IMR-90 (cell line): ENCODE measurements at regions of chr1 and their contacts with region 1.

Region 1: DNA sequence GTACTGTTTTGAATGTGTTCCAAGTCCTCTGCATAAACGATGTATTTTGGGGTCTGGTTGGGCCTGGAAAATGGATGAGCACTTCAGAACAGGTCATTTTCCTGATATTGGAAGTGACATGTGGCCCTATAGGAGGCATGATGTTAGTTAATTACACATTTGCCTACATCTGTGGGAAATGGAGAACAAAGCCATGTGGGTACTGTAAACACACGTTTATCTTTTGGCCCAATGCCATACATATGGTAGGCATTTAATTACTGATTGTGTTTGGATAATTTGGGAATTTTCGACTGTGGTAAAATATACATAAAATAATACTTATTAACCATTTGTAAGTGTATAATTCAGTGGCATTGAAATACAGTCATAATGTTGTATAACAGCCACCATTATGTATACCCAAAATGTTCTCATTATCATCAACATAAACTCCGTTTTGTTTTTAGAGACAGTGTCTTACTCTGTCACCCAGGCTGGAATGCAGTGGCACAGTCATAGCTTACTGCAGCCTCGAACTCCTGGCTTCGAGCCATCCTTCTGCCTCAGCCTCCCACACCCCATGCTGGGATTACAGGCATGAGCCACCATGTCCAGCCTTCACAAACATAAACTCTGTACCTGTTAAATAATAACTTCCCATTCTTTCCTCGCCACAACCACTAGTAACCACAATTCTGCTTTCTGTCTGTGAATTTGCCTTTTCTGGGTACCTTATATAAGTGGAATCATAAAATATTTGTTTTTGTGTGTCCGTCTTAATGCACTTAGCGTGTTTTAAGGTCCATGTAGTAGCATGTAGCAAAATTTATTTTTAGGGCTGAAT is 11.9 kb upstream of the RNPEP start:
- DNase-seq: peak; percentile 58
- ATAC-seq: peak; percentile 56; the same call in 1 of the 2 replicates
- H3K4me3 ChIP-seq: no peak overlapping the region
- H3K27ac ChIP-seq: no peak overlapping the region
- H3K4me1 ChIP-seq: no peaks in the 10 kb centered on the region; the same call in 1 of the 2 replicates
- H3K27me3 ChIP-seq: no peaks in the 10 kb centered on the region
- CTCF ChIP-seq: no peak
- POLR2A ChIP-seq: no peak
- RAD21 ChIP-seq: no peak

Region 2: DNA sequence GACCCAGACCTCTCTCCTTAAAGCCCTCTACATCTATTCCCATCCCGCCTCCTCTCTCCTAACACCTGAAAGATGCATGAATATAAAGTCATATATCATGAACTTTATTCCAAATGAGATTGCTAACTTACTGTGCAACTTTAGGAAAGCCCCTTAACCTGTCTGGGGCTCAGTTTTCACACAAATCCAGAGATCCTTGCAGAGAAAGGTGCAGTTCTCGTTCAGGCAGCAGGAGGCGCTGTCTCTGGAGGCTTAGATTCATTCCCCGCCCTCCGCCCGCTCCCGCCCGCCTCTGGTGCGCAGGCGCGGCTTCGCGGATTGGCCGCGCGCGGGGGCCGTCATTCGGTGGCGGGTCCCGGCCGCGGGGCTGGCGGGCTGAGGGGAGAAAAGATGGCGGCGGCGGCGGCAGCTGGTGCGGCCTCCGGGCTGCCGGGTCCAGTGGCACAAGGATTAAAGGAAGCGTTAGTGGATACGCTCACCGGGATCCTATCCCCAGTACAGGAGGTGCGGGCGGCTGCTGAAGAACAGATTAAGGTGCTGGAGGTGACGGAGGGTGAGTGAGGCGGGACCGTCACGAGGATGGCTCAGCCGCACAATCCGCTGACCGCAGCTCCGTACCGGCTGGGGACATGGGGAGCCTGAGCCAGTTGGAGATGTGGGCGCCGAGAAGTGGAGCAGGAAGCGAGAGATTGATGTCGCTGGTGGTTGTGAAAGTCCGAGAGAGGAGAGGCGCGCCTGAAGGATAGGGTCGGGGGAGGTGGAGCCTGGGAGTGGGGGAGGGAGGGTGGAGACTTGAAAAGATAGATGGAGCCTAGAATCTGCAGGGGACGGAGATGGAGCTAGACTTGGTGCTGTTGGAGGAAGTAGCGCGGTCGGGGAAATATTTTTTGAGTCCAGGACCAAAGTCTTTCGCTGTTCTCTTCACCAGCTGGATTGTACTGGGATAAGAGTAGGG is 141.4 kb before region 1 on chr1 and contains the start of gene IPO9:
- CTCF ChIA-PET with region 1: no interaction called
- POLR2A ChIA-PET with region 1: no interaction called
- dilution Hi-C with region 1: no loop called
- in situ Hi-C with region 1: no loop called
- intact Hi-C with region 1: loop called (anchors 1 kb)
- DNase-seq: peak; percentile 91
- ATAC-seq: peak; percentile 88
- H3K4me3 ChIP-seq: peak within 1 kb of the TSS; percentile 95
- H3K27ac ChIP-seq: peak within 1 kb of the TSS; percentile 100
- H3K4me1 ChIP-seq: peaks cover 3% of the 10 kb centered on the region
- H3K27me3 ChIP-seq: no peaks in the 10 kb centered on the region
- CTCF ChIP-seq: peak; percentile 96
- POLR2A ChIP-seq: peak; percentile 87
- RAD21 ChIP-seq: peak; percentile 52
- total RNA-seq, gene IPO9: 13.9 and 14.0 TPM in 2 replicates

Region 3: DNA sequence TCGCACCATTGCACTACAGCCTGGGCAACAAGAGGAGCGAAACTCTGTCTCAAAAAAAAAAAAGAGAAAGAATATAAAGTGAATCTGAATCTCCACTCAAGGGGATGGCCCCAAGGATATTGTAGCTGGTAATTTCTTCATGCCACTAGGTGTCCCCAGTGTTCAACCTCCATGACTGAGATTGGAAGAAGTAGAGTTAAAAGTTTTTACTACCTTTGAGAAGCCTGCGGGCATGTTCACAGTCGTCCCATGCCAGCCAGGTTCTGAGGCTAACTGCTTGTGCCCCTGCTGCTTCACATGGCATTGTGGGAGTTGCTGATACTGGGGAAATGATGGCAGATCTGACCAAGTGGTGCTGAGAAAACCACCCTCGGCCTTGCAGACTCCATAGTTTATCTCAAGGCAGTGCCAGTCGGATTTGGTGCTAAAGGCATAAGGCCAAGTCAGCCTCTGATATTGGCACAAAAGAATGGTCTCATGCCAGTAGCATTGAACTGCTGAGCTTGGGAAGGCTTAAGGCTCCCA is 92.6 kb before region 1 on chr1:
- CTCF ChIA-PET with region 1: interaction called, 5 read pairs
- POLR2A ChIA-PET with region 1: no interaction called
- dilution Hi-C with region 1: no loop called
- in situ Hi-C with region 1: no loop called
- intact Hi-C with region 1: loop called (anchors 1 kb)
- DNase-seq: peak; percentile 63
- ATAC-seq: peak; percentile 75
- H3K4me3 ChIP-seq: no peak overlapping the region
- H3K27ac ChIP-seq: no peak overlapping the region
- H3K4me1 ChIP-seq: peaks cover 4% of the 10 kb centered on the region
- H3K27me3 ChIP-seq: no peaks in the 10 kb centered on the region
- CTCF ChIP-seq: peak; percentile 73
- POLR2A ChIP-seq: no peak
- RAD21 ChIP-seq: peak; percentile 71